Activated CD4-positive, alpha-beta memory T cell treated with anti-CD3 and anti-CD28 coated beads, Interleukin-2, amount 10 ng/mL, durations not matched to agents 7 days and 5 days (primary cell): ENCODE measurements at regions of chr9 and their contacts with region 1.

Region 1: DNA sequence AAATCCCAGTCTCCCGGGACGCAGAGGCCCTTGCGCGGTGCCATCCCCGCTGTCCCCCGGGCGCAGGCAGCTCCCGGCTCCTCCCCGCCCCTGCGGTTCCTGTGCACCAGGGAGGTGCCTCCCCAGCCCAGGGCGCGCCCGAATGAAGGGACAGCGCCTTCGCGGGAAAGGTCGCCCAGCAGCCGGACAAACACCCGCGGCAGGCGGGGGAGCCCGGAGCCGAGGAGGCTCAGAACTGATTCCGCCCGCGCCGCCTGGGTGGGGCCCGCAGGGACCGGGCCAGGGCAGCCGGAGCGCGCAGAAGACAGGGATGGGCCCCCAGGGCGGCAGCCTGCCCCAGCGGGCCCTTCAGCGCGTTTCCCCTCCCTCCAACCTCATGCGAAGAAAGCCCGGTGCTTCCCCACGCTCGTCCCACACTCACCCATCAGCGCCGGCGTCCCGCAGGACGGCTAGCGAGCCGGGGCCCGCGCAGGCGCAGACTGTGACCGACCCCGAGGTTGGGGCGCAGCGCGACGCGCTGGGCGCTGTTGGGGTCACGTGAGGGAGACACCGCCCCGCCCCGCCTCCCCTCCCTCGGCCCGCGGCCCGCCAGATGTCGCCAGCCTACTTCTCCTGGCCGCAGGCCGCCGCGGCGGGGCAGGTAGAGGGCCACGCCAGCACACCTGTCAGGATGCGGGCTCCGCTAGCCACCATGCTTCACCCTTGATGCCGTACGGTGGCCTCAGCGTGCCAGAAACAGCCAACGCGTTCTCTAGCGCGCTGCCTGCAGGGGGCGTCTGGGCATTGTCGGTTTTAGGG is at the start of gene SLC25A51:
- DNase-seq: peak; percentile 95
- H3K4me3 Mint-ChIP-seq: peak within 1 kb of the TSS; percentile 87
- H3K27ac Mint-ChIP-seq: peak within 1 kb of the TSS; percentile 87
- H3K4me1 Mint-ChIP-seq: peaks cover 35% of the 10 kb centered on the region
- H3K27me3 Mint-ChIP-seq: peaks cover 5% of the 10 kb centered on the region
- total RNA-seq, gene SLC25A51: 28.4 to 29.3 TPM

Region 2: DNA sequence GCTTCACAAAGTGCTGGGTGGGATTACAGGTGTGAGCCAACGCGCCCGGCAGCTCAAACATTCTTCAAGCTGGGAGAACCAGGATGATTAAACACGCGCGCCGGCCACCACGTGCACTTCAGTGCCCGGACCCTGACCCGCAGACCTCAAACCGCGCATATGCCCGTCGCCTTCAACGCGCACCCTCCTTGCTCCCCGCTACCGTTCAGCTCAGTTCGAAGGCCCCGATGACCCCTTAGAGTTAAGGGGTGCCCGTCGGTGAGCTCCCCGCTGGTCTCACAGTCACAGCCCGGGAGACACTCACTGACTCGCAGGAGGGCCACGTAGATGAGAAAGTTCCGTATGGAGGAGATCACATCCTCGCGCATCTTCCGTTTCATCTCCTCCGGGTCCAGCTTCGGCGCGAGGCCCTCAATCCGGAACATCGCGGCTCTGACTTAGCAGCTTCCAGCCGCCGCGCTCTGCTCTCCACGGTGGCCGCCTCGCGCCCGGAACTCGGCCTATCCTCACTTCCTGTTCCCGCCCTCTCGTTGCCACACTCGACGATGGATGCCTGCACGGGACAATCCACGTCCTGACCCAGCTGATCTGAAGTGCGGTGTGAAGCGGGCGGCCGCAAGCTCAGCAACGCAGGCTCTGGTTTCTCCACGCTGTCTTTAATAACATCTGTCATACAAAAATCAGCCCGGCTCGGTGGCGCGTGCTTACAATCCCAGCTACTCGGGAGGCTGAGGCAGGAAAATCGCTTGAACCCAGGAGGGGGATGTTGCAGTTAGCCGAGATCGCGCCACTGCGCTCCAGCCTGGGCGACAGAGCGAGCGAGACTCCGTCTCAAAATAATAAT is 311.5 kb before region 1 on chr9 and contains the start of gene TOMM5:
- CTCF ChIA-PET with region 1: interaction called, 6 read pairs
- POLR2A ChIA-PET with region 1: interaction called, 15 read pairs
- DNase-seq: peak; percentile 94
- H3K4me3 Mint-ChIP-seq: peak within 1 kb of the TSS; percentile 97
- H3K27ac Mint-ChIP-seq: peak within 1 kb of the TSS; percentile 95
- H3K4me1 Mint-ChIP-seq: peaks cover 33% of the 10 kb centered on the region
- H3K27me3 Mint-ChIP-seq: peaks cover 17% of the 10 kb centered on the region
- total RNA-seq, gene TOMM5: 81.0 to 86.4 TPM

Region 3: DNA sequence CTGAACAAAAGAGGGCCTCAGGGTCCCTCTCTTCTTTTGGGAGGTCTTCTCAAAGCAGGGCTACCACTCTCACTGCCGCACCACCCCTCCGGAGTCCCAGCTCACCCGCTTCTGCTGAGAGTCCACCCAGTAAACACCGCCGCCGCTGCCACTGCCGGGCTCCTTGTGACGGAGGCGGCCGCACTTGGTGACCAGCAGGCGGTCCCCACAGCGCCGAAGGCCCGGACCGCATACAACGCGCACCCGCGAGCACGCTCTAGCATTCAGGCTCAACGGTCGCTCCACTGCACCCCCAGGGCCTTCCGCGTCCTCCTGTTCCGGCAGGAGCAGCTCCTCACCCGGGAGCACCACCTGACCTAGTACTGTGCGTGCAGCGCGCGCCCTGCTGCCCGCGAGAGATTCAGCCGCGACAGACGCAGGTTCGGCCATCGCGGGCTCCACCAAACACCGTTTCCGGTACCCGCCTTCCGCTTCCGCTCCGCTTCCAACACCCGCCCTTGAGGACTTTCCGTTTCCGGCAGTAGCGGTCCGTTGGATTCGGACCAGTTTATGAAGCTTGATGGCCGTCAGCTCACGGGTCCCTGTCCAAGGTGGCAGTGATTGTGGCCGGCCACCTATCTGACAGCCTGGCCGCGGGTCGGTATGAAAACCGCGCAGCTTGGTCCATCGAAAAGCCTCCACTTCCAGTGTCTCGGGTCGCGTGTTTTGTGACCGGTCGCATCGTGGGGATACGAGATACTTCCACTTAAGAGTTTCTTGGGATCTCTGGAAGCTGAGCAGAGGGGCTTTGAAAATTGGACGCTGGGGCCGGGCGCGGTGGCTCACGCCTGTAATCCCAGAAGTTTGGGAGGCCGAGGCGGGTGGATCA is 119.0 kb before region 1 on chr9 and contains the start of gene EXOSC3:
- CTCF ChIA-PET with region 1: interaction called, 5 read pairs
- POLR2A ChIA-PET with region 1: interaction called, 10 read pairs
- DNase-seq: peak; percentile 90
- H3K4me3 Mint-ChIP-seq: peak within 1 kb of the TSS; percentile 98
- H3K27ac Mint-ChIP-seq: peak within 1 kb of the TSS; percentile 95
- H3K4me1 Mint-ChIP-seq: peaks cover 47% of the 10 kb centered on the region
- H3K27me3 Mint-ChIP-seq: no peaks in the 10 kb centered on the region
- total RNA-seq, gene EXOSC3: 66.6 to 69.6 TPM

Region 4: GRCh38 chr9:37800631-37801286 is 103.1 kb before region 1 on chr9 and contains the start of gene DCAF10:
- CTCF ChIA-PET with region 1: interaction called, 3 read pairs
- POLR2A ChIA-PET with region 1: interaction called, 11 read pairs
- DNase-seq: peak; percentile 89
- H3K4me3 Mint-ChIP-seq: peak within 1 kb of the TSS; percentile 89
- H3K27ac Mint-ChIP-seq: peak within 1 kb of the TSS; percentile 83
- H3K4me1 Mint-ChIP-seq: peaks cover 40% of the 10 kb centered on the region
- H3K27me3 Mint-ChIP-seq: peaks cover 2% of the 10 kb centered on the region
- total RNA-seq, gene DCAF10: 18.7 to 20.7 TPM

Region 5: DNA sequence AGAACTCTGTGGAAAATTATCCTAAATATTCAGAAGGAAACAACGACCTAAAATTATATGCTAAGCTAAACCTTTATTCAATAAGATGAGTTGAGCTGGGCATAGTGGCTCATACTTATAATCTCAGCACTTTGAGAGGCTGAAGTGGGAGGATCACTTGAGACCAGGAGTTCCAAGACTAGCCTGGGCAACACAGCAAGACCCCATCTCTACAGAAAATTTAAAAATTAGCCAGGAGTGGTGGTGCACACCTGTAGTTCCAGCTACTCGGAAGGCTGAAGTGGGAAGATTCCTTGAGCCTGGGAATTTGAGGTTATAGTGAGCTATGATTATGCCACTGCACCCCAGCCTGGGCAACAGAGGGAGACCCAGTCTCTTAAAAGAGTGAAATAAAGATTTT is 51.6 kb before region 1 on chr9:
- CTCF ChIA-PET with region 1: no interaction called
- POLR2A ChIA-PET with region 1: no interaction called
- DNase-seq: no peak
- H3K4me3 Mint-ChIP-seq: no peak overlapping the region
- H3K27ac Mint-ChIP-seq: no peak overlapping the region
- H3K4me1 Mint-ChIP-seq: no peaks in the 10 kb centered on the region
- H3K27me3 Mint-ChIP-seq: no peaks in the 10 kb centered on the region

Region 6: GRCh38 chr9:38068866-38069629 is 165.2 kb after region 1 on chr9 and contains the start of gene SHB:
- CTCF ChIA-PET with region 1: interaction called, 10 read pairs
- POLR2A ChIA-PET with region 1: no interaction called
- DNase-seq: peak; percentile 80
- H3K4me3 Mint-ChIP-seq: peak within 1 kb of the TSS; percentile 67
- H3K27ac Mint-ChIP-seq: no peak within 1 kb of the TSS
- H3K4me1 Mint-ChIP-seq: peaks cover 22% of the 10 kb centered on the region
- H3K27me3 Mint-ChIP-seq: peaks cover 27% of the 10 kb centered on the region
- total RNA-seq, gene SHB: 0.93 to 1.0 TPM